ENCODE measurements at regions of chr15 and their contacts with region 1.

Region 1: DNA sequence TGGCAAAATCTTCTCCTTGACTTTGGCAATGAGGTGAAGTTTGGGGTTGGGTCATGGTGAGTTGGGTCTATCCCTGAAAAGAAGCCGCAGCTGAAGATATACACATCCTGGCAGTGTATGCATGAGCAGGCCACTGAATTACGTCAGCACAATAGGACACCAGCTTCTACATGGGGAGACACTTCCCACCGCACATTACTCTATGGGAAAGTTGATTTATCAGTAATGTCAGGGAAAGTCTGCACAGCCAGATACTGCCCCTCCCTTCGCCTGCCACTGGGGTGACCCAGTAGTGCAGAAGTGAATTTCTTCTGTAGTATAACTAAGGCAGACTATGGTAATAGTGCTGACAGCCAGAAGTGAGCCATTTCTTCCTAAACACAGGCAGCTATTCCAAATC is 245.0 kb downstream of the NTRK3 start:
- DNase-seq: no peak
- H3K4me3 ChIP-seq: no peak overlapping the region
- H3K27ac ChIP-seq: no peak overlapping the region
- H3K4me1 ChIP-seq: peaks cover 4 to 11% of the 10 kb centered on the region in 2 donors
- H3K27me3 ChIP-seq: no peaks in the 10 kb centered on the region
- CTCF ChIP-seq: no peak

Region 2: GRCh38 chr15:88036154-88036839 is 24.8 kb after region 1 on chr15:
- intact Hi-C with region 1: loop called (anchors 2 kb)
- DNase-seq: no peak
- H3K4me3 ChIP-seq: no peak overlapping the region
- H3K27ac ChIP-seq: no peak overlapping the region
- H3K4me1 ChIP-seq: no peaks in the 10 kb centered on the region
- H3K27me3 ChIP-seq: no peaks in the 10 kb centered on the region
- CTCF ChIP-seq: no peak